H1 (cell line): ENCODE measurements at regions of chr3 and their contacts with region 1.

Region 1: GRCh38 chr3:132029182-132029902 is 5.5 kb downstream of the CPNE4 start:
- DNase-seq: peak; percentile 91 to 94
- H3K4me3 ChIP-seq: no peak overlapping the region
- H3K27ac ChIP-seq: no peak overlapping the region
- H3K4me1 ChIP-seq: peaks cover 0 to 2% (median 0%) of the 10 kb centered on the region in 4 experiments; a peak in 3 of 7 replicates
- H3K27me3 ChIP-seq: peaks cover 0 to 14% (median 6%) of the 10 kb centered on the region in 4 experiments; a peak in 6 of 7 replicates
- CTCF ChIP-seq: peak; percentile 85 to 96 (median 96)
- EP300 ChIP-seq: no peak
- POLR2A ChIP-seq: no peak
- RAD21 ChIP-seq: peak; percentile 99

Region 2: GRCh38 chr3:131750256-131750655 is 279.1 kb before region 1 on chr3:
- CTCF ChIA-PET with region 1: no interaction called
- POLR2A ChIA-PET with region 1: no interaction called
- DNase-seq: no peak
- H3K4me3 ChIP-seq: no peak overlapping the region
- H3K27ac ChIP-seq: no peak overlapping the region
- H3K4me1 ChIP-seq: peaks cover 0 to 2% (median 0%) of the 10 kb centered on the region in 4 experiments; a peak in 2 of 7 replicates
- H3K27me3 ChIP-seq: no peaks in the 10 kb centered on the region
- CTCF ChIP-seq: no peak
- EP300 ChIP-seq: no peak
- POLR2A ChIP-seq: no peak
- RAD21 ChIP-seq: no peak

Region 3: GRCh38 chr3:132006605-132007204 is 22.6 kb before region 1 on chr3:
- CTCF ChIA-PET with region 1: interaction called, 34 read pairs
- POLR2A ChIA-PET with region 1: no interaction called
- DNase-seq: peak in 1 of 2 experiments; percentile 66
- H3K4me3 ChIP-seq: no peak overlapping the region
- H3K27ac ChIP-seq: no peak overlapping the region
- H3K4me1 ChIP-seq: peaks cover 0 to 7% (median 4%) of the 10 kb centered on the region in 4 experiments; a peak in 5 of 7 replicates
- H3K27me3 ChIP-seq: no peaks in the 10 kb centered on the region
- CTCF ChIP-seq: peak; percentile 69 to 83 (median 81)
- EP300 ChIP-seq: no peak
- POLR2A ChIP-seq: no peak
- RAD21 ChIP-seq: peak; percentile 53 to 75

Region 4: GRCh38 chr3:132352541-132353143 is 323.3 kb after region 1 on chr3:
- CTCF ChIA-PET with region 1: no interaction called
- POLR2A ChIA-PET with region 1: no interaction called
- DNase-seq: peak in 1 of 2 experiments; percentile 76
- H3K4me3 ChIP-seq: no peak overlapping the region
- H3K27ac ChIP-seq: no peak overlapping the region
- H3K4me1 ChIP-seq: peaks cover 0 to 16% (median 8%) of the 10 kb centered on the region in 4 experiments; a peak in 3 of 7 replicates
- H3K27me3 ChIP-seq: no peaks in the 10 kb centered on the region
- CTCF ChIP-seq: peak in 2 of 3 experiments; percentile 80 to 93; a peak in 3 of 4 replicates
- EP300 ChIP-seq: no peak
- POLR2A ChIP-seq: no peak
- RAD21 ChIP-seq: peak; percentile 95 to 97